T-cell (primary cell): ENCODE measurements at regions of chr10 and their contacts with region 1.

Region 1: GRCh38 chr10:115384665-115385064 is 291.5 kb downstream of the ATRNL1 start:
- DNase-seq: no peak
- ATAC-seq: no peak
- H3K4me3 ChIP-seq: no peak overlapping the region
- H3K4me3 Mint-ChIP-seq: no peak overlapping the region
- H3K27ac ChIP-seq: no peak overlapping the region
- H3K27ac Mint-ChIP-seq: no peak overlapping the region
- H3K4me1 ChIP-seq: no peaks in the 10 kb centered on the region
- H3K4me1 Mint-ChIP-seq: no peaks in the 10 kb centered on the region
- H3K27me3 ChIP-seq: no peaks in the 10 kb centered on the region
- H3K27me3 Mint-ChIP-seq: no peaks in the 10 kb centered on the region

Region 2: DNA sequence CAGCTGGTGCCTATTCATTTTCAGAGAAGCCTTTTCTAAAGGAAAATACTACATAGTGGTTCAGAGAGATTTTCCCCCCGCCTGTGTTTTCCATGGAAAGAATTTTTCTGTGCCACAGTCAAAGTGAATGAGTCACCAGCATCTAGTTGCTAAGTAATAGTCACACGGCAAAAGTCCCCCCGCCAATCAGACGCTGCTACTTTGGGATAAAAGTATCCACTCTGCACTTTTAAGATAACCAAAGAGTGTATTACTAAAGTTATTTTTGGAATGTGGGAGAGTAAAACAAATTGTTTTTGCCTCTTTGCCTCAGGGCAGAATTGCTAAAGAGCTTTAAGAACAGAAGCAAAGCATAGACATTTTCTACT is 750.1 kb before region 1 on chr10:
- CTCF ChIA-PET with region 1: no interaction called
- POLR2A ChIA-PET with region 1: interaction called in 1 of 2 experiments, 15 read pairs
- DNase-seq: no peak
- ATAC-seq: no peak
- H3K4me3 ChIP-seq: no peak overlapping the region
- H3K4me3 Mint-ChIP-seq: no peak overlapping the region
- H3K27ac ChIP-seq: no peak overlapping the region
- H3K27ac Mint-ChIP-seq: no peak overlapping the region
- H3K4me1 ChIP-seq: peaks cover 0 to 14% of the 10 kb centered on the region in 2 experiments
- H3K4me1 Mint-ChIP-seq: peaks cover 18 to 25% (median 20%) of the 10 kb centered on the region in 3 donors
- H3K27me3 ChIP-seq: peaks cover 0 to 26% of the 10 kb centered on the region in 2 experiments
- H3K27me3 Mint-ChIP-seq: peaks cover 51 to 53% of the 10 kb centered on the region in 2 donors

Region 3: GRCh38 chr10:115250784-115251183 is 133.9 kb before region 1 on chr10:
- CTCF ChIA-PET with region 1: no interaction called
- POLR2A ChIA-PET with region 1: no interaction called
- DNase-seq: no peak
- ATAC-seq: no peak
- H3K4me3 ChIP-seq: no peak overlapping the region
- H3K4me3 Mint-ChIP-seq: no peak overlapping the region
- H3K27ac ChIP-seq: no peak overlapping the region
- H3K27ac Mint-ChIP-seq: no peak overlapping the region
- H3K4me1 ChIP-seq: no peaks in the 10 kb centered on the region
- H3K4me1 Mint-ChIP-seq: no peaks in the 10 kb centered on the region
- H3K27me3 ChIP-seq: no peaks in the 10 kb centered on the region
- H3K27me3 Mint-ChIP-seq: no peaks in the 10 kb centered on the region